Upper lobe of right lung (tissue), 1 donor: ENCODE measurements at regions of chr20 and their contacts with region 1.

Region 1: GRCh38 chr20:62616728-62617621 is 25.3 kb upstream of the SLCO4A1 start:
- DNase-seq: peak; percentile 87
- ATAC-seq: peak; percentile 90
- H3K4me3 ChIP-seq: no peak overlapping the region
- H3K27ac ChIP-seq: peak overlapping the region; percentile 83
- H3K4me1 ChIP-seq: peaks cover 30% of the 10 kb centered on the region
- H3K27me3 ChIP-seq: no peaks in the 10 kb centered on the region
- CTCF ChIP-seq: peak; percentile 96

Region 2: DNA sequence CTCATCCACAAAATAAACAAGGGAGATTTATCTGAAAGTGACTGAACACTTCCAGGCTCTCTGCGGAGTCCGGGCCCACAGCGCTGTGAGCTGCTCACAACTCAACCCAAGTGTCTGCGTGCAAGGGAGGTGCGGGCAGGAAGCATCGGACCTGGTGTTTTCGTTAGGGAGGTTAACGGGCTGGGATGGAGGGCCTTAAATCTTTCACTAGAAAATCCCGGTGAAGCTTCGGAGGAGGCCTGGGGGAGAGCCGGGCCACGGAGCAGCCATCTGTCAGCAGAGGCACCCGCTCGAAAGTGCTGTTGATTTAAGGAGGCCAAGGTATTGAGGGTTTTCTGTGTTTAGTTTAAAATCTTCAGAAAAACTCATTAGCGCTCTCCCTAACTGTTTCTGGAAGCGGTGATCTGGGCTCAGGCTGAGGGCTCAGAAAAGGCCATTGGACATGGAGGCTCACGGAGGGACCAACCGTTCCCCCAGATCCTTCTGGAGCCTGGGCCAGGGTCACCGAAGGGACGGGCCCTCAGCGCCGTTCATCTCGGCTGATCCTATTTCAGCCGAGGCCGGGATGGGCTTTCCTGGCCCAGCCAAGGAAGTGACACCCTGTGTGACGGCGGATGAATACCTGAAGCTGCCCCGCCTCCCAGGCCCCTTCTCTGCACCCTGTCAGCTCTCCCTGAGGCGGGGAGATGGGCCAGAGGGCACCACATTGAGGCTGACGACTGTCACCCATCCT is 161.9 kb before region 1 on chr20:
- intact Hi-C with region 1: no loop called
- DNase-seq: no peak
- ATAC-seq: no peak
- H3K4me3 ChIP-seq: no peak overlapping the region
- H3K27ac ChIP-seq: no peak overlapping the region
- H3K4me1 ChIP-seq: no peaks in the 10 kb centered on the region
- H3K27me3 ChIP-seq: peaks cover 63% of the 10 kb centered on the region
- CTCF ChIP-seq: no peak

Region 3: DNA sequence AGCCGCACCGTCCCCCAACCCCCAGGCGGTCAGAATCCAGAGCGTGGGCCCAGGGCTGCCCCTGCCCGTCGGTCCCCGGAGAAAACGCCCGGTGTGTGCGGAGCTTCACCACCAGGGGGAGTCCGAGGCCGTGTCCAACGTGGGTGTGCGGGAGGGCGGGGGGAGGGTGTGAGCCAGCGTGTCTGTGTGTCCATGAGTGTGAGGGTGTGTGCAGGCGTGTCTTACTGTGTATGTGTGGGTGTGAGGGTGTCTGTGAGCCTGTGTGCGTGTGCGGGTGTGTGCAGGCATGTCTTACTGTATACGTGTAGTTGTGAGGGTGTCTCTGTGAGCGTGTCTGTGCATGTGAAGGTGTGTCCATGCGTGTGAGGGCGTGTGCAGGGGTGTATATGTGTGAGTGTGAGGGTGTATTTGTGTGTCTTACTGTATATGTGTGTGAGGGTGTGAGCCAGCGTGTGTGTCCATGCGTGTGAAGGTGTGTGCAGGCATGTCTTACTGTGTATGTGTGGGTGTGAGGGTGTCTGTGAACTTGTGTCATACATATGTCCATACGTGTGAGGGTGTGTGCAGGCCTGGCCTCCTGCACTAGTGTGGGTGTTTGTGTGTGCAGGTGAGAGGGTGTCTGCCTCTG is 116.6 kb before region 1 on chr20:
- intact Hi-C with region 1: loop called (anchors 5 kb)
- DNase-seq: peak; percentile 89
- ATAC-seq: peak; percentile 86
- H3K4me3 ChIP-seq: no peak overlapping the region
- H3K27ac ChIP-seq: no peak overlapping the region
- H3K4me1 ChIP-seq: peaks cover 8% of the 10 kb centered on the region
- H3K27me3 ChIP-seq: no peaks in the 10 kb centered on the region
- CTCF ChIP-seq: peak; percentile 76

Region 4: DNA sequence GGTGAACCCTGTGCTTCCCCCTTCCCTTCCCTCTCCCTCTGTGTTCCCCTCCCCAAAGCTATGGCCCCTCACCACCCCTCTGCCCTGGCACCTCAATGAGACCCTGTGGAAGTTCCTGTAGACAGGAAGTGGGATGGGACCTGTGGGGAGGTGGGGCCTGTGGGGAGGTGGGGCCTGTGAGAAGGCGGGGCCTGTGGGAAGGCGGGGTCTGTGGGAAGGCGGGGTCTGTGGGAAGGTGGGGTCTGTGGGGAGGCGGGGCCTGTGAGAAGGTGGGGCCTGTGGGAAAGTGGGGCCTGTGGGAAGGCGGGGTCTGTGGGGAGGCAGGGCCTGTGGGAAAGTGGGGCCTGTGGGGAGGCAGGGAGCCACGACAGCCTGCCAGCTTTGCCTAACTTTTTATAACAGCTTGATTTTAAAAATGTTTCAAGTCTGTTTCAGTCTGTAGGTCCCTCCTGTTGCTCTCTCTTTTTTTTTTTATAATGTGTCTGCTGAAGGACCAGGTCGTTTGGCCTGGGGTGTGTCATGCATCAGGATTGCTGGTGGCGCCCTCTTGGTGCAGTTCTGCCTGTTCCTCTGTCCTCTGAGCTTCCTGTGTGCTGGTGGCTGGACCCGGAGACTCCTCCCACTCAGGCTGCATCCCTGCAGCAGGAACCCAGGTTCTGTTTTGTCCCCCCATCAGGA is 45.2 kb before region 1 on chr20:
- intact Hi-C with region 1: no loop called
- DNase-seq: no peak
- ATAC-seq: no peak
- H3K4me3 ChIP-seq: no peak overlapping the region
- H3K27ac ChIP-seq: no peak overlapping the region
- H3K4me1 ChIP-seq: no peaks in the 10 kb centered on the region
- H3K27me3 ChIP-seq: peaks cover 33% of the 10 kb centered on the region
- CTCF ChIP-seq: no peak